PC-9 (cell line): ENCODE measurements at regions of chr14 and their contacts with region 1.

Region 1: DNA sequence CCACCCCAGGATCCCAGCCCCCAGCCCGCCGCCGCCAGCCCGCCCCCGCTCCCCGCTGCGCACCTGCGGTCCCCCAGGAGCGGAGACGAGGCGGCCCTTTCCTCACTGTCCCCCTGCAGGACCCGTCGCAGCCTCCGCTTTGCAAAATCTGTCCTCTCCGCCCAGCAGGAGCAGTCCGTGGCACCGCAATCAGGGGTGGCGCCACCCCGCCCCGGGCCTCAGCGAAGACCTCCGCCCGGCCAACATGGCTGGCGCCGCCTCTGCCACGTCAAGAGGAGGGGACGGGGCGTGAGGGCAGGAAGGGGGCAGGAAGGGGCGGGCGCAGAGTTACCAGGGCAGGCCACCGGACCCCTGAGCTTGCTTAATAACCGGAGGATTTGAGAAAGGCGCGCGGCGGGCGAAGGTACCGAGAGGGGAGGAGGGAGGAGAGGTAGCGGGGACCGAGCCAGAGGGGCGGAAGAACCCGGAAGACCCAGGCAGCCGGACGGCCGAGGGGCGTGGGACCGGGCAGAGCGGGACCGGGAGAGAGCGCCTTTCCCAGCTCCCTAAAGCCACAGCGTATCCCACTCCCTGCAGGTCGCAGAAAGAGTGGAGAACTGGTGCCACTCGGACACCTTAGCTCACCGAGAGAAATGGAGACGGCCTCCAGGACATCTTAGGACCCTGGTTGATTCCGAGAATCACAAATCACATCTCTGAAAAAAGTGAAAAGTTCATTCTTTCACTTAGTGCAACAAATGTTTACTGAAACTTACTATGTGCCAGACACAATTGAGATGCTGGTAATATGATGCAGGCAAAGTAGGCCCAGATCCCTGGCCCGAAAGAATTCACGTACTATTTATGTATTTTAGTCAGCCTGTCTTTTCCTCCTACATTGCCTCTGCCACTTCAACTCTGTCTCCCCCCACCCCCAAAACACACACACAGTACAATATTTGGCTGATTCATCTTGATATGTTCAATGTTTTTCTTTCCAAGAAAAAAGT is at the start of gene SEC23A:
- DNase-seq: peak; percentile 75 to 86
- H3K4me3 ChIP-seq: peak within 1 kb of the TSS; percentile 69
- H3K27ac ChIP-seq: peak within 1 kb of the TSS; percentile 70
- H3K4me1 ChIP-seq: peaks cover 12% of the 10 kb centered on the region
- H3K27me3 ChIP-seq: no peaks in the 10 kb centered on the region
- CTCF ChIP-seq: no peak
- total RNA-seq, gene SEC23A: 32.0 and 42.0 TPM in 2 replicates

Region 2: GRCh38 chr14:39114073-39114838 is 11.0 kb after region 1 on chr14 and contains the start of gene GEMIN2:
- CTCF ChIA-PET with region 1: interaction called, 10 read pairs
- POLR2A ChIA-PET with region 1: no interaction called
- intact Hi-C with region 1: no loop called
- DNase-seq: peak; percentile 82 to 84
- H3K4me3 ChIP-seq: peak within 1 kb of the TSS; percentile 69
- H3K27ac ChIP-seq: peak within 1 kb of the TSS; percentile 66
- H3K4me1 ChIP-seq: peaks cover 11% of the 10 kb centered on the region; the same call in 1 of the 2 replicates
- H3K27me3 ChIP-seq: no peaks in the 10 kb centered on the region
- CTCF ChIP-seq: no peak
- total RNA-seq, gene GEMIN2: 11.6 and 13.4 TPM in 2 replicates

Region 3: GRCh38 chr14:39174560-39175444 is 71.5 kb after region 1 on chr14 and contains the start of gene PNN:
- CTCF ChIA-PET with region 1: no interaction called
- POLR2A ChIA-PET with region 1: interaction called, 5 read pairs
- intact Hi-C with region 1: loop called (anchors 10 kb)
- DNase-seq: peak; percentile 92 to 96
- H3K4me3 ChIP-seq: peak within 1 kb of the TSS; percentile 95
- H3K27ac ChIP-seq: peak within 1 kb of the TSS; percentile 95
- H3K4me1 ChIP-seq: peaks cover 21% of the 10 kb centered on the region
- H3K27me3 ChIP-seq: no peaks in the 10 kb centered on the region
- CTCF ChIP-seq: no peak
- total RNA-seq, gene PNN: 65.8 and 72.0 TPM in 2 replicates

Region 4: DNA sequence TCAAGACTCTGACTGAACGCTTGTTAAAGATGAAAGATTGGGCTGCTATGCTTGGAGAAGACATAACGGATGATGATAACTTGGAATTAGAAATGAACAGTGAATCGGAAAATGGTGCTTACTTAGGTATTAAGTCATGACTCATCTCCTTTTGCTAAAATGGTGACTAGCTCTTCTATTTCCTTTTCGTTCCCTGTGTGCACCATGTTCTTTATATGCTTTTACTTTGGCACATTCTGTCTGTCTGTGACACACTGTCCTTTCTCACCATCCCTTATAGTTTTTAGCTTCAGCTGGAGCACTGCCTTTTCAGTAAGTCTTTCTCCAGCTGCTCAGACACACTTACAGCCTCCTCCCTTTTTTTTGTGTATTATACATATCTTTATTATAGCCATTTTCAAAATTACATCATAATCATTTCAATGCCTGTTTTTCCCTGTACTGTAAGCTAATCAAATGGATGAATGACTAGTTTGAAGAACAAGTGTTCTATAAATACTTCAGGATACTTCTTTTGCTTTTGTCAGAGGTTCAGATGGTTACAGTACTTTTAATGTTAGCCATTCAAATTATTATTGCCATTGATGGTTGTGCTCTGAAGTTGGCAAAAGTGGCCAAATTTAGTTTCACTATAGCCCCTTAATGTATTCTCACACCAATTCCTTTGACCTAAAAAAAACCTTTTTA is 199.0 kb after region 1 on chr14:
- CTCF ChIA-PET with region 1: no interaction called
- POLR2A ChIA-PET with region 1: no interaction called
- intact Hi-C with region 1: no loop called
- DNase-seq: no peak
- H3K4me3 ChIP-seq: no peak overlapping the region
- H3K27ac ChIP-seq: no peak overlapping the region
- H3K4me1 ChIP-seq: no peaks in the 10 kb centered on the region
- H3K27me3 ChIP-seq: no peaks in the 10 kb centered on the region
- CTCF ChIP-seq: no peak

Region 5: GRCh38 chr14:39368261-39368959 is 265.1 kb after region 1 on chr14:
- CTCF ChIA-PET with region 1: no interaction called
- POLR2A ChIA-PET with region 1: no interaction called
- intact Hi-C with region 1: loop called (anchors 5 kb)
- DNase-seq: peak; percentile 31 to 38
- H3K4me3 ChIP-seq: no peak overlapping the region
- H3K27ac ChIP-seq: no peak overlapping the region
- H3K4me1 ChIP-seq: no peaks in the 10 kb centered on the region
- H3K27me3 ChIP-seq: no peaks in the 10 kb centered on the region
- CTCF ChIP-seq: peak; percentile 56

Region 6: GRCh38 chr14:39384177-39384576 is 280.9 kb after region 1 on chr14:
- CTCF ChIA-PET with region 1: interaction called, 14 read pairs
- POLR2A ChIA-PET with region 1: no interaction called
- intact Hi-C with region 1: no loop called
- DNase-seq: no peak
- H3K4me3 ChIP-seq: no peak overlapping the region
- H3K27ac ChIP-seq: no peak overlapping the region
- H3K4me1 ChIP-seq: no peaks in the 10 kb centered on the region
- H3K27me3 ChIP-seq: no peaks in the 10 kb centered on the region
- CTCF ChIP-seq: no peak

Region 7: DNA sequence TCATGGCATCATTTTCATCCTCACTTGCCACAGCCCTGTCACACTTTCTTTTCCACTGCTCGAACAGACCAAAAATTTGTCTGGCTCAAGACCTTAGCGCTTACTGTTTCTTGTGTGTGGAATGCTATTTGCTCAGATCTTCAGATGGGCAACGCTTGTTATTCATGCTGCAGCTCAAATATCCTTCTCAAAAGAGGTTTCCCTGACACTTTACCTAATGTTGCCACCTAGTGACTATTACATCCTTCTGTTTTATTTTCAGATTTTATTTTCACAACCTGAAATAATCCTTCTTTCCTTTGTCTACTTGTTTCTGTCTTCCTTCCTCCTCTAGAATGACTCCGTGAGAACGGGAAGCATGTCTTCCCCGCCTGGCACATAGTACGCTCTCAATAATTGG is 323.3 kb after region 1 on chr14:
- CTCF ChIA-PET with region 1: interaction called, 3 read pairs
- POLR2A ChIA-PET with region 1: no interaction called
- intact Hi-C with region 1: loop called (anchors 1 kb)
- DNase-seq: no peak
- H3K4me3 ChIP-seq: no peak overlapping the region
- H3K27ac ChIP-seq: no peak overlapping the region
- H3K4me1 ChIP-seq: peaks cover 8% of the 10 kb centered on the region; the same call in 1 of the 2 replicates
- H3K27me3 ChIP-seq: no peaks in the 10 kb centered on the region
- CTCF ChIP-seq: peak; percentile 50; the same call in 1 of the 2 replicates

Region 8: GRCh38 chr14:39432179-39432618 is 328.9 kb after region 1 on chr14 and contains the start of gene FBXO33:
- CTCF ChIA-PET with region 1: no interaction called
- POLR2A ChIA-PET with region 1: interaction called, 4 read pairs
- intact Hi-C with region 1: loop called (anchors 2 kb)
- DNase-seq: peak; percentile 74 to 91
- H3K4me3 ChIP-seq: peak within 1 kb of the TSS; percentile 94
- H3K27ac ChIP-seq: peak within 1 kb of the TSS; percentile 96
- H3K4me1 ChIP-seq: peaks cover 8% of the 10 kb centered on the region
- H3K27me3 ChIP-seq: no peaks in the 10 kb centered on the region
- CTCF ChIP-seq: no peak
- total RNA-seq, gene FBXO33: 6.2 and 9.0 TPM in 2 replicates